ENCODE measurements at regions of chr2 and their contacts with region 1.

Region 1: DNA sequence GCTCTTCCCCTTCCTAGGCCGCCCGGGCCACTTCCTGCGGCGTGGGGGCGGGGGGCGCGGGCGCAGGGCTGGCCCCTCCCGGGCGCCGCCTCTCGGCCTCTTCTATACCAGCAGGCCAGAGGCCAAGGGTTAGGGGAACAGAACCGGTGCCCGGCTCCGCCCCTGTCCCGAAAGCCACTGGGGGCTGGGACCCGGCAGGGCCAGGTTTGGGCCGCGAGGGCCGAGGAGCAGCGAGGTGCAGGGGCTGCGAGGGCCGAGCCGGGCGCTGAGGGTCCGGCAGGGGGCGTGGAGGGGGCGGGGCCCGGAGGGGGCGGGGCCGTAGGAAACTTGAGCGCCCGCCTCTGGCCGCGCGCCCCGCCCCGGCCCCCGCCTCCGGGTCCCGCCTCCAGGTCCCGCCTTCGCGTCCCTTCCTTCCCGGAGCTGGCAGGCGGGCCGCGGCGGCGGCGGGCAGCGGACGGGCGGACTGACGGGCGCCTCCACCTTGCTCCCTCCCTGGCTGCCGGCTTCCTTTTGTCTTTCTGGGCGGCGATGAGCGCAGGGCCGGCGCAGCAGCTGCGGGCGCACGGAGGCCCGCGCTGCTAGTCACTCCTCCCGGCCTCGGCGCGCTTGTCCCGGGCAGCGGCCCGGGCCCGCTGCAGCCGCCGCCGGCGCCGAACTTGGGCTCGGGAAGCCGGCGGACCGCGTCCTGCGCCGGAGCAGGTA is at the start of gene HPCAL1:
- DNase-seq: peak in 9 of 10 donors; percentile 61 to 89 (median 78)
- H3K4me3 ChIP-seq: peak within 1 kb of the TSS; percentile 49 to 95 (median 80)
- H3K27ac ChIP-seq: peak within 1 kb of the TSS in 55 of 59 donors; percentile 5 to 87 (median 77)
- H3K27me3 ChIP-seq: no peaks in the 10 kb centered on the region
- CTCF ChIP-seq: peak; percentile 18 to 87 (median 66)
- total RNA-seq, gene HPCAL1: 40.1 to 252 (median 129) TPM

Region 2: GRCh38 chr2:10122386-10123280 is 180.0 kb before region 1 on chr2 and contains the start of gene RRM2:
- intact Hi-C with region 1: loop called in 1 of 2 experiments (anchors 5 kb)
- DNase-seq: peak; percentile 87 to 95 (median 92)
- H3K4me3 ChIP-seq: peak within 1 kb of the TSS; percentile 41 to 78 (median 61)
- H3K27ac ChIP-seq: no peak within 1 kb of the TSS
- H3K27me3 ChIP-seq: peaks cover 0 to 31% (median 18%) of the 10 kb centered on the region in 45 donors
- CTCF ChIP-seq: peak in 8 of 56 donors; percentile 3 to 23 (median 12)
- total RNA-seq, gene RRM2: 0.11 to 3.3 (median 0.83) TPM in 45 of 120 experiments, not detected in the others

Region 3: GRCh38 chr2:10141736-10142642 is 160.6 kb before region 1 on chr2:
- intact Hi-C with region 1: loop called in 1 of 2 experiments (anchors 5 kb)
- DNase-seq: peak in 1 of 10 donors; percentile 31
- H3K4me3 ChIP-seq: no peak overlapping the region
- H3K27ac ChIP-seq: peak overlapping the region in 1 of 59 donors; percentile 12
- H3K27me3 ChIP-seq: no peaks in the 10 kb centered on the region
- CTCF ChIP-seq: peak in 50 of 56 donors; percentile 13 to 63 (median 43)

Region 4: GRCh38 chr2:10162586-10163497 is 139.8 kb before region 1 on chr2:
- intact Hi-C with region 1: no loop called
- DNase-seq: peak in 2 of 10 donors; percentile 38 to 41
- H3K4me3 ChIP-seq: no peak overlapping the region
- H3K27ac ChIP-seq: peak overlapping the region in 39 of 59 donors; percentile 10 to 77 (median 59)
- H3K27me3 ChIP-seq: no peaks in the 10 kb centered on the region
- CTCF ChIP-seq: peak in 6 of 56 donors; percentile 6 to 25 (median 10)

Region 5: DNA sequence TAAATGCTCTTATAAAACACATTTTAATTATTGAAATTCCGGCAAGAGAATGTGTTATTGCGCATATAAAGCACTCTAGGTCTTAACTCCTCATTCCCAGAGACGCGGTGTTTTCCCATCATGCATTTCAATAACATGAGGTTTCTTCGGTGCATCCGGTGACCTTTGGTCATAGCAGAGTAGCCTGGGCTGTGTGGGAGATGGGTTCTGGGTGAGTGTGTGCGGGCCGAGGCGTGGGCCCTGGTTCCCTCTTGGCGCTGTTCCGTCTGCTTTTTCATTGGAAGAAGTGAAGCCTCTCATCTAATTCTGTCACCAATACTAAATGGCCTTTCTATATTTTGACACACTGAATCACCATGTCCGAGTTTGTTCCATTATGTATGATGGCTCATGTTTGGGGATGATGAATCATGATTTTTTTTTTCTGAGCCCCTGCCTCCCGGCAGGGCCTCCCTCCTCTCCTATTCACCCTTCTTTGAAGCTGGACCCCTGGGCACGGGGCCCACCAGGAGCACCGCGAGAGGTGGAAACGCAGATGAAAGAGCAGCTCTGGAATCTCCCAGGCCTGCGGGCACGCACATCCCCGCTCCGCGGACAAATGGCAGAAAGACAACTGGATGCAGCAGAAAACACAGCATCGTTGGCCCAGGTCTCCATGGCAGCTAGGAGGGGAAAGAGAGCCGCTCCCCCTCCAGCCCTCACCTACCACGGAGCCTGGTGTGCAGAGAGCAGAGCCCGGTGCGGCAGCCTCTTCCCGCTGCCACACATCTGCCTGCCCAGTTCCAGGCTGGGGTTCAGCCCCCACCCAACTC is 85.7 kb before region 1 on chr2:
- intact Hi-C with region 1: no loop called
- DNase-seq: no peak
- H3K4me3 ChIP-seq: no peak overlapping the region
- H3K27ac ChIP-seq: peak overlapping the region in 23 of 59 donors; percentile 2 to 81 (median 44)
- H3K27me3 ChIP-seq: peaks cover 0 to 6% (median 0%) of the 10 kb centered on the region in 45 donors
- CTCF ChIP-seq: no peak

Region 6: DNA sequence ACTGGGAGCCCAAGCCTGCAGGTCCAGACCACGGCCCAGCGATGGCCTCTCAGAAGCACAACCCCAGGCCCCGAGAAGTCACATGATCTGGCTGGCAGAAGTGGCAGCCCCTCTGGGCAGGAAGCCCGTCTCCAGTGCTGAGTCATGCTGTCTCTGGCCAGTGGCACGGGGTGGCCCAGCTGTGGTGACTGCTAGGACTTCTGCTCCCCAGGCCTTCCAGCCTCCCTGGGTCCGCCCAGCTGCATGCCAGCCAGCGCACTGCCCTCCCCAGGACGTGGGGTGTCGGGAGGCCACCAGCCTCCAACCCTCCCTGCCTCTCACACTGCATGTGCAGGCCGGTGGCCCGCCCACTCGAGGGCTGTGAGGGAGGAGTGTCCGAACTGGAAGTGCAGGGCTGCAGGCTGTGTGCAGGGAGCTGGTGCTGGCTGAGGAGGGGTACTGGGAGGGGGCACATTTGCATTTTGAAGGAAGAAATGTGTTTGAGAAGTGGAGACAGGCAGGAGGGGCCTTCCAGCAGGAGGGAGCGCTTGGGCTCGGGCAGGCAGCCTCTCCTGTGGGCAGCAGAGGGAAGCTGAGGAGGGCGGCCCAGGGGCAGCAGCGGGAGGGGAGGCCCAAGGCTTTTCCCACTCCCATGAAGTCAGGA is 17.0 kb before region 1 on chr2:
- intact Hi-C with region 1: loop called in 1 of 2 experiments (anchors 2 kb)
- DNase-seq: peak in 9 of 10 donors; percentile 79 to 93 (median 88)
- H3K4me3 ChIP-seq: peak overlapping the region in 3 of 59 donors; percentile 5 to 16 (median 15)
- H3K27ac ChIP-seq: peak overlapping the region; percentile 34 to 96 (median 86)
- H3K27me3 ChIP-seq: no peaks in the 10 kb centered on the region
- CTCF ChIP-seq: peak in 41 of 56 donors; percentile 10 to 63 (median 30)

Region 7: GRCh38 chr2:10355471-10356458 is 53.1 kb after region 1 on chr2:
- intact Hi-C with region 1: loop called in 1 of 2 experiments (anchors 5 kb)
- DNase-seq: no peak
- H3K4me3 ChIP-seq: no peak overlapping the region
- H3K27ac ChIP-seq: no peak overlapping the region
- H3K27me3 ChIP-seq: no peaks in the 10 kb centered on the region
- CTCF ChIP-seq: no peak